Heart right ventricle (tissue), 16 donors: ENCODE measurements at regions of chr3 and their contacts with region 1.

Region 1: DNA sequence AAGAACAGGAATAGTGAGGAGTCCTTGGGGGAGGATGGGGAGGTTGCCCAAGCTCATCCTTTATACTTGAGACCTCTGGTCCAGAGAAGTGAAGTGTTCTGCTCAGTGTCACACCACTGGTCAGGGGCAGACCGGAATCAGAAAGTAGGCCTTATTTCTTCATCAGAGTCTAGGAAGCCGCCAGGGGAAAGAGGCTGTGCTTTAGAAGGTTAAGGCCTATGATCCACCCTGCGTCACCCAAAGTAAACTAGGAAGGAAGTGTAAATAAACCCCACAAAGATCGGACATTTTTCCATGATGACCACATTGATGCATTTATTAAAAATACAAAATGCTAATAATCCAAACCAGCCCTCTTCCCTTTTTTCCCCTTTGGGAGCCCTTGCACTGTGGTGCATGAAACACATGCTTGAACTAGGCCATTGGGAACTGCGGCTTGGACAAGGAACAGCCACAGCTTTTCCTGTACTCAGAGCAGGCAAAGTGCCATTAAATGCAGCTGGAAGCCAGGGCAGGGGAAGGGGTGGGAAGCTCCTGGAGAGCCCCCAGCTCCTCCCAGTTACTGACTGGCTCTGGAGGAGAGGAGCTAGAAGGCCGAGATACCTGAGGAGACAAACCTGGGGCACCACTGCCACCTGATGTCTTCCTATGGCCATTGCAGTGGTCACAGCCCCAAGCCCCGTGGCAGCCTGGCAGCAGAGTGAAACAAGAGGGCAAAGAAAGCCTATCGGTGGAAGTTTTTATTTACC is 37.0 kb downstream of the CDC25A start:
- DNase-seq: peak; percentile 76 to 81
- ATAC-seq: peak; percentile 93 to 98 (median 96)
- H3K4me3 ChIP-seq: peak overlapping the region in 1 of 10 donors; percentile 7
- H3K27ac ChIP-seq: peak overlapping the region; percentile 12 to 73 (median 58)
- H3K4me1 ChIP-seq: peaks cover 5 to 21% (median 18%) of the 10 kb centered on the region in 9 donors
- H3K27me3 ChIP-seq: no peaks in the 10 kb centered on the region
- CTCF ChIP-seq: peak; percentile 54 to 94 (median 85)

Region 2: DNA sequence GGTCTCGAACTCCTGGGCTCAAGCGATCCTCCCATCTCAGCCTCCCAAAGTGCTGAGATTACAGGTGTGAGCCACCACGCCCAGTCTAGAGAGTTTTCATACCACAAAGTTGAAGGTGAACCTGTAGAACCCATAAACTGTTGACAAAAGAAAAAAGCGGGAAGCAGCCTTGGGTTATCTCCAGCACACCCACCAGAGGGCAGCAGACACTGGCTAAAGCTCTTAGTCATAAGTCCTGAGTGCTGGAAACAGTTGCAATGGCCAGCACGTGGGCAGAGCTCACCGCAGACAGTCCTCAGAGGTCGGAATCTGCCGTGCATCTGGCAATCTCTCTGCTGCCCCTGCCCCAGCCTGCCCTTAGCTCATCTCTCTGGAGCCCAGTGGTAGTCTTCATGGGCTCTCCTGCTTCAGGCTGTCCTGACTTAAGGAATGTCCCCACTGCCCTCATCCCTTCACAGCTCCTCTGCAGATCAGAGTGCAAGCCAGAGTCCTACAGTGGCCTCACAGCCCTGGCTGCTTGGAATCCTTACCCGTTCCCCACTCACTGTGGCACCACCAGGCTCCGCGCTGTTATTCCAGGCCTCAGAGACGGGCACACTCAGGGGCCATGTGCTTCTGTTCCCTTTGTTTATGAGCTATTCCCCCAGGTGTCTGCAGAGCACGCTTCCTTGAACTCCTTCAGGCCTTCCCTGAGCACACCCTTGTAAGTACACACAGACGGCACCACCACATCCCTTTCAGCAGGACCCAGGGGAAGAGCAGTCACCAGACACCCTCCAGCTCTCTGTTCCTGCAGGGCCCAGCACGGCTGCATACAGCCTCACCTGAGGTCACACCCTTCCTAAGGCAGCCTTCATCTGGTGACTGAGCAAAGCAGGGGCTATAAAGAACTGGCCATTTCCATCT is 628.9 kb before region 1 on chr3:
- intact Hi-C with region 1: loop called in 1 of 10 experiments (anchors 10 kb)
- DNase-seq: peak; percentile 73 to 80
- ATAC-seq: peak; percentile 88 to 97 (median 96)
- H3K4me3 ChIP-seq: no peak overlapping the region
- H3K27ac ChIP-seq: no peak overlapping the region
- H3K4me1 ChIP-seq: peaks cover 0 to 8% (median 4%) of the 10 kb centered on the region in 9 donors
- H3K27me3 ChIP-seq: no peaks in the 10 kb centered on the region
- CTCF ChIP-seq: peak; percentile 76 to 94 (median 90)

Region 3: DNA sequence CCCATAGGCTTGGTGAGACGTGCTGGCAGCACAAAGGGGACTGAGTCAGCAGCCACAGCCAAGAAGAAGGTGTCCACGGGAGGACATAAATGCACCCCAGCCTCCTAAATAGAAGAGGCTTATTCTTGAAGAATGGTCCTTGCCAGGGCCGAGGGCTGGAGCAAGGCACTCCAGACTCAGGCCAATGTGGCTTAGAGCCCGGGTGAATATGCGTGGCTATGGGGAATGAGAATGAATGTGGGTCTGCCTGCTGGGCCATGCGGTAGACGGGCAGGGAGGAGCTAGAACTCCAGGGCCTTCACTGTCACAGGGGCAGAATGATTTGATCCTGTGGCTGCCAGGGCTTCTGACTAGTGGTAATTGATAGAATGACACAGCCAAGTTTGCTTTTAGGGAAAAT is 314.2 kb before region 1 on chr3:
- intact Hi-C with region 1: loop called (anchors 1 to 5 kb)
- DNase-seq: no peak
- ATAC-seq: no peak
- H3K4me3 ChIP-seq: no peak overlapping the region
- H3K27ac ChIP-seq: no peak overlapping the region
- H3K4me1 ChIP-seq: peaks cover 0 to 14% (median 0%) of the 10 kb centered on the region in 9 donors
- H3K27me3 ChIP-seq: no peaks in the 10 kb centered on the region
- CTCF ChIP-seq: no peak

Region 4: DNA sequence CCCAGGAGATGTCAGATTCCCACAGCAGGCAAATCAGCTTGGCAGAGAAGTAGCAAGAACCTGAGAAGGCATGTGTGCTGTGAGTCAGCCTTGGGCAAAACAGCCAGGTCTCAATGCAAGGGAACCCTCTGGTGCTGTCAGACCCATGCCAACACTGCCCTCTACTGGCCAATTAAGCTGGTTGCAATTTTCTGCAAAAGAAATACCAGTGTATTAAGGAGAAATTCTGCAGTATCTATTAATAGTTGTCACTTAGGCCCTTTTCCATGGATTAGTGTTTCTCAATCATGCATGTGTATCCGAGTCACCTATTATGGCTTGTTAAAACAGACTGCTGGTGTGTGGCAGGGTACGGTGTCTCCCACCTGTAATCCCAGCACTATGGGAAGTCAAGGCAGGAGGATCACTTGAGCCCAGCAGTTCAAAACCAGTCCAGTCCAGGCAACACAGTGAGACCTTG is 161.2 kb before region 1 on chr3:
- intact Hi-C with region 1: loop called in 9 of 10 experiments (anchors 2 to 10 kb)
- DNase-seq: peak; percentile 42 to 84
- ATAC-seq: peak; percentile 88 to 97 (median 94)
- H3K4me3 ChIP-seq: no peak overlapping the region
- H3K27ac ChIP-seq: peak overlapping the region in 3 of 10 donors; percentile 10 to 45 (median 39)
- H3K4me1 ChIP-seq: peaks cover 0 to 61% (median 29%) of the 10 kb centered on the region in 9 donors
- H3K27me3 ChIP-seq: no peaks in the 10 kb centered on the region
- CTCF ChIP-seq: peak; percentile 84 to 94 (median 92)

Region 5: GRCh38 chr3:48088749-48089466 is 62.3 kb before region 1 on chr3:
- intact Hi-C with region 1: loop called in 5 of 10 experiments (anchors 2 to 10 kb)
- DNase-seq: peak; percentile 96 to 97
- ATAC-seq: peak; percentile 94 to 98 (median 96)
- H3K4me3 ChIP-seq: peak overlapping the region; percentile 66 to 99 (median 90)
- H3K27ac ChIP-seq: peak overlapping the region; percentile 96 to 99 (median 98)
- H3K4me1 ChIP-seq: peaks cover 10 to 46% (median 43%) of the 10 kb centered on the region in 9 donors
- H3K27me3 ChIP-seq: no peaks in the 10 kb centered on the region
- CTCF ChIP-seq: no peak